ENCODE measurements at regions of chr7 and their contacts with region 1.

Region 1: DNA sequence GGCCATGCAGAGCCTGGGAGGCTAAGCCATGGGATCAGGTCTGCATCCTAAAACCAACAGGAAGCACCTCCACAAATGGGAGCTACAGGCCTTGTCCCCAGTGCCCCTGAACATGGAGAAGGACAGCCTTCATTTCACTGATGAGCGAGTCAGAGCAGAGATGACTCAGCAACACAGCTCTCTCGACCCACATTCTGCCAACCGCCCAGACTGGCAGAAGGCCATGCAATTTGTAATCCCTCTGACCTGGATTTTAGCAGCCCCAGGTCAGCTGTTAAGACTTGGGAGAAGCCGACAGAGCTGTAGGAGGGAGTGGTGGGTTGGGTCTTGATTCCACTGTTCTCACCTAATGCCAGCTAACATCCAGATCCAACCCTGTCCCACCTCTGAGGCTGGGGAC is 25.5 kb downstream of the VOPP1 start:
- DNase-seq: peak; percentile 95 to 100
- H3K4me3 ChIP-seq: peak overlapping the region; percentile 24; the same call in 1 of the 2 replicates
- H3K27ac ChIP-seq: peak overlapping the region; percentile 71
- H3K4me1 ChIP-seq: peaks cover 71% of the 10 kb centered on the region
- H3K27me3 ChIP-seq: no peaks in the 10 kb centered on the region
- CTCF ChIP-seq: no peak

Region 2: GRCh38 chr7:55504093-55504859 is 42.6 kb before region 1 on chr7:
- CTCF ChIA-PET with region 1: no interaction called
- POLR2A ChIA-PET with region 1: interaction called, 7 read pairs
- intact Hi-C with region 1: loop called (anchors 1 kb)
- DNase-seq: peak; percentile 68 to 91
- H3K4me3 ChIP-seq: no peak overlapping the region
- H3K27ac ChIP-seq: peak overlapping the region; percentile 23
- H3K4me1 ChIP-seq: peaks cover 29% of the 10 kb centered on the region
- H3K27me3 ChIP-seq: no peaks in the 10 kb centered on the region
- CTCF ChIP-seq: no peak

Region 3: GRCh38 chr7:55557666-55558188 is 10.9 kb after region 1 on chr7:
- CTCF ChIA-PET with region 1: interaction called, 6 read pairs
- POLR2A ChIA-PET with region 1: interaction called, 12 read pairs
- intact Hi-C with region 1: no loop called
- DNase-seq: no peak
- H3K4me3 ChIP-seq: no peak overlapping the region
- H3K27ac ChIP-seq: peak overlapping the region; percentile 82
- H3K4me1 ChIP-seq: peaks cover 81% of the 10 kb centered on the region
- H3K27me3 ChIP-seq: no peaks in the 10 kb centered on the region
- CTCF ChIP-seq: no peak

Region 4: DNA sequence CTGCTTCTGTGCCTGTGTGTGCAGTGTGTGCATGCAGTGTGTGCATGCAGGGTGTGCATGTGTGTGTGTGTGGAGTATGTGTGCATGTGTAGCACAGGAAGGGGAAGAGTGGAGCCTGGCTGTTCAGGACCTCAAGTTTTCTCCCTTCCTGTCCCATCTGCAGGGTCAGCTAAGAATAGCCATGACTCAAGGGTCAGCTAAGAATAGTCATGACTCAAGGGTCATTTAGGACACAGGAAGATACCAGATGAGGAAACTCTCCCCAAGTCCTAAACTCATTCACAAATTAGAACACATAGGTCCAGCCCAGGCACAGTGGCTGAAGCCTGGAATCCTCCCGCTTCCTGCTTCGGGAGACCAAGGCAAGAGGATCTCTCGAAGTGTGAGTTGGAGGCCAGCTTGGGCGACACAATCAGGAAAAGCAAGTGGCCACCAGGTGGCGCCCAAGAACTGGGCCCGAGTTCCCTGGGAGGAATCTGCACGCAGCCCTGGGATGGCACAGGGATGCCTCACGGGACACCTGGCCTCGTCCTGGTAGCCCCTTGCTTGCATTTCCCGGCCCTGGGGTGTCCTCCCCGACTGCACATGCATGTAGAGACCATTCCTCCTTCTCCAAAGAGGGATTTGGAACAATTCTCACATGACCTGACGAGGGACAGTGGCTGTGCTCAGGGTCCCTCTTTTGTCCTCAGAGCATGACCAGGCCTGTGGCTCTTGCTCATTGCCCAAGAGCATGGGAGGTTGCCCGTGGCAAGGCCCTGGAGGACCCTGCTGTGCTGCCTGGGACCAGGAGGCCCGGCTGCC is 46.9 kb after region 1 on chr7:
- CTCF ChIA-PET with region 1: no interaction called
- POLR2A ChIA-PET with region 1: no interaction called
- intact Hi-C with region 1: loop called (anchors 2 kb)
- DNase-seq: peak; percentile 77 to 82
- H3K4me3 ChIP-seq: no peak overlapping the region
- H3K27ac ChIP-seq: no peak overlapping the region
- H3K4me1 ChIP-seq: peaks cover 4% of the 10 kb centered on the region
- H3K27me3 ChIP-seq: no peaks in the 10 kb centered on the region
- CTCF ChIP-seq: peak; percentile 100

Region 5: GRCh38 chr7:56092789-56093531 is 546.1 kb after region 1 on chr7 and contains the start of gene PHKG1:
- CTCF ChIA-PET with region 1: interaction called, 11 read pairs
- POLR2A ChIA-PET with region 1: no interaction called
- intact Hi-C with region 1: no loop called
- DNase-seq: peak in 1 of 2 experiments; percentile 52
- H3K4me3 ChIP-seq: no peak within 1 kb of the TSS
- H3K27ac ChIP-seq: no peak within 1 kb of the TSS
- H3K4me1 ChIP-seq: no peaks in the 10 kb centered on the region
- H3K27me3 ChIP-seq: no peaks in the 10 kb centered on the region
- CTCF ChIP-seq: 0 out of 2 replicates have a peak, but pooled peaks have one; percentile 40
- total RNA-seq, gene PHKG1: 2.7 and 3.9 TPM in 2 replicates

Measured in PC-9 (cell line).